Common myeloid progenitor, CD34-positive (primary cell): ENCODE measurements at regions of chr10 and their contacts with region 1.

Region 1: GRCh38 chr10:96843823-96844222 is 11.7 kb downstream of the LCOR start:
- DNase-seq: no peak
- H3K4me3 ChIP-seq: no peak overlapping the region
- H3K27ac ChIP-seq: no peak overlapping the region
- H3K4me1 ChIP-seq: peaks cover 10 to 36% (median 22%) of the 10 kb centered on the region in 4 experiments
- H3K27me3 ChIP-seq: no peaks in the 10 kb centered on the region

Region 2: GRCh38 chr10:96831867-96832720 is 11.7 kb before region 1 on chr10 and contains the start of gene LCOR:
- CTCF ChIA-PET with region 1: interaction called, 5 read pairs
- POLR2A ChIA-PET with region 1: interaction called, 10 read pairs
- DNase-seq: peak; percentile 93 to 98 (median 97)
- H3K4me3 ChIP-seq: peak within 1 kb of the TSS; percentile 72 to 89 (median 85)
- H3K27ac ChIP-seq: peak within 1 kb of the TSS; percentile 72 to 85
- H3K4me1 ChIP-seq: peaks cover 30 to 45% (median 38%) of the 10 kb centered on the region in 4 experiments
- H3K27me3 ChIP-seq: no peaks in the 10 kb centered on the region